MCF 10A (cell line): ENCODE measurements at regions of chr7 and their contacts with region 1.

Region 1: DNA sequence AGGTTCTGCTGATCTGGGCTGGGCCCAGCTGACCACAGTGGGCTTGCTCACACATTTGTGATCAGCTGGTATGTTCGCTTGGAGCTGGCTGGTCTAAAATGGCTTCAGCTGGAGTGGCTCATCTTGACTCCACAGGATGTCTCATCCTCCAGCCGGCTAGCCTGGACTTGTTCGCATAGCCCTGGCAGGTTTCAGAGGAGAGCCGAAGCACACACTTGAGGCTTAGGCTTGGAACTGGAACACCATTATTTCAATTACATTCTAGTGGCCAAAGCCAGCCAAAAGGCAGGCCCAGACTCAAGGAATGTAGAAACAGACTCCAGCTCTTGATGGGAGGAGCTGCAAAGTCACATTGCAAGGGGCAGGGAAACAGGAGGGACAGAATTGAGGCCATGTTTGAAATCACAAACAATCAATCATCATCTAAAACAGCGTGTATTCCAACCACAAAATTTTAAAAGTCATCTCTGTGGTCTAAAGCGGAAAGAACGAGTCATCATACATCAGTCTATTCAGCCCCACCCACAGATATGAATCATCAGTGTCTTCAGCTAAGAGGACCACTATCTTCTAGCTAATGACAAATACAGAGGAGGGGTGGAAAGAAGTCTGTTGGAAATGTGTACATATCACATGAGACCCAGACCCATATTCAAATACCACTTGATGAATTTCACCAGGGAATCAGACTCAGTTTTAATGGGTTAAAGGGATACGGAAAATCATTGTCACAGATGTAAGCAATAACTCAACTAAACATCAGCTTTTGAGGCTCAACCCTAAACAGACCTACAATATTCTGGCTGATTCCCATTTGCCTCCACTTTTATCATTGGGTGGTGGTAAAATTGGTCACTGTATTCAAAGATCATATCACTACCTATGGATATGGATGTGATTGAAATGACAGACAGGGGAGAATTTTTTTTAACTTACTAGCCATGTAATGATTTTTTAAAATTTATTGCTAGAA is 139.0 kb upstream of the MKLN1 start:
- DNase-seq: peak; percentile 94
- H3K4me3 Mint-ChIP-seq: peak overlapping the region; percentile 48
- H3K27ac Mint-ChIP-seq: peak overlapping the region; percentile 90
- H3K4me1 Mint-ChIP-seq: peaks cover 18% of the 10 kb centered on the region
- H3K27me3 Mint-ChIP-seq: no peaks in the 10 kb centered on the region
- CTCF ChIP-seq: no peak

Region 2: DNA sequence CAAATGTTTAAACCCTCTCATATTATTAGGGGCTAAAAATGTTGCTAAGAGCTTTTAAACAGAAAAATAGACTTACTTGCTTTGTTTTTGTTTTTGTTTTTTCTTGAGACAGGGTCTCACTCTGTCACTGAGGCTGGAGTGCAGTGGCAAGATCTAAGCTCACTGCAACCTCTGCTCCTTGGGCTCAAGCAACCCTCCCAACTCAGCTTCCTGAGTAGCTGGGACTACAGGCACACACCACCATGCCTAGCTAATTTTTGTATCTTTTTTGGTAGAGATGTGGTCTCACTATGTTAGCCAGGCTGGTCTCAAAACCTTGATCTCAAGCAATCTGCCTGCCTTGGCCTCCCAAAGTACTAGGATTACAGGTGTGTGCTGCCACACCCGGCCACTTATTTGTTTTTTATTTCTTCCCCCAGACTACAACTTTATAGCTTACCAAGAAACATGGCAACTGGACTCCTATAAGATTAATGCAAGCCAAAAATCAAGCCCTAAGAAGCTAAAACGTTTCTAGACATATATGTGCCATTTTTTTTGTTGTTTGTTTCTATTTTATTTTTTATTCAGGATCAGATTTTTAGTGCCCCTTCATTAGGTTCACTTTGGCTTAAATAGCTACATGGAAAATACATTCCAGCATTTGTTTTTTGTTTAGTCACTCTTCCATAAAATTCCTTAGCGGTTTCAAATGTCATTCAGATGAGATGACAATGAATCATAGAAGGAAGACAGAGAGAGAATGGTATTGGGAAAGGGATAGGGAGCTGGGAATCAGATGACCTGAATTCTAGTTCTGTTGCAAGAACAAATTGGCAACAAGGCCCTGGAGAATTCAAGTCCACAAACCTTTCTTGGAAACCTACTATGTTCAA is 24.4 kb before region 1 on chr7:
- CTCF ChIA-PET with region 1: interaction called, 5 read pairs
- POLR2A ChIA-PET with region 1: interaction called, 34 read pairs
- intact Hi-C with region 1: no loop called
- DNase-seq: peak; percentile 92
- H3K4me3 Mint-ChIP-seq: peak overlapping the region; percentile 65
- H3K27ac Mint-ChIP-seq: peak overlapping the region; percentile 97
- H3K4me1 Mint-ChIP-seq: peaks cover 28% of the 10 kb centered on the region
- H3K27me3 Mint-ChIP-seq: no peaks in the 10 kb centered on the region
- CTCF ChIP-seq: no peak

Region 3: DNA sequence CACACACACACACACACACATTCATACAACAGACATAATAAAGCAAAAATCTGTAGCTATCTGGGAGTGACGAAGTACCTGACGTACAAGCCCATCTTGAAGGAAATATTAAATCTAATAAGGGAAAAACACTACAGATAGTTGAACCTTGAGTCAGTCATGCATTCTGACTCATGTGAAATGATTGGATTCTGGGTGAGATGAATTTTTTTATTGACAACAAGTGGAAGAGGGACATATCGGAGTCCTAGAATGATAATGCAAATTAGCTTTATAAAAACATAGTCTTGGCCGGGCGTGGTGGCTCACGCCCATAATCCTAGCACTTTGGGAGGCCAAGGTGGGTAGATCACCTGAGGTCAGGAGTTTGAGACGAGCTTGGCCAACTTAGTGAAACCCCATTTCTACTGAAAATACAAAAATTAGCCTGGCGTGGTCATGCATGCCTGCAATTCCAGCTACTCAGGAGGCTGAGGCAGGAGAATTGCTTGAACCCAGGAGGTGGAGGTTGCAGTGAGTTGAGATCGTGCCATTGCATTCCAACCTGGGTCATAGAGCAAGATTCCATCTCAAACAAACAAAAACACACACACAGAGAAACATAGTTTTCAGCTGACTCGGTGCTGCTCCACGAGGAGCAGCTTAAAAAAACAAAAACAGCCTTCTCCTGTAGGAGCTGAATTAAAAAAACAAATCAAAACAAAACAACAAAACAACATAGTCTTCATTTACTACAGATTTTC is 15.3 kb before region 1 on chr7:
- CTCF ChIA-PET with region 1: interaction called, 3 read pairs
- POLR2A ChIA-PET with region 1: interaction called, 11 read pairs
- intact Hi-C with region 1: no loop called
- DNase-seq: peak; percentile 20
- H3K4me3 Mint-ChIP-seq: no peak overlapping the region
- H3K27ac Mint-ChIP-seq: peak overlapping the region; percentile 61
- H3K4me1 Mint-ChIP-seq: peaks cover 8% of the 10 kb centered on the region
- H3K27me3 Mint-ChIP-seq: no peaks in the 10 kb centered on the region
- CTCF ChIP-seq: no peak

Region 4: DNA sequence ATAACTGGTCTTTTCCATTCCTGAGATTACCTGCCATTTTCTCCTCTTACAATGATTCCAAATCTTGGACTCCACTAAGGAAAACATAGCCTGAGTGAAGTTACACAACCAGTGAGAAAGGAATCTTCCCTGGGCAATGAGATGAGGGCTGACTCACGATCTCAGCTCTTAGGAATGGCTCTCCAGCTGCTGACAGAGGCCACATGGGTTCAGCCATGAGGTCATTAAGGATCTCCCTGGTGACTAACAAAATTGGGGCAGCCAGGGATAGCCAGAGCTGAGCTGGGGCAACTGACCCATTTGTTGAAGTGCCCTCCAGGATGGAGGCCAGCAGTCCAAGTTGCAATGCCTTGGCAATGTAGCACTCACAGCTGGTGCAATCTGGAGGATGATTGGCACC is 60.4 kb after region 1 on chr7:
- CTCF ChIA-PET with region 1: no interaction called
- POLR2A ChIA-PET with region 1: no interaction called
- intact Hi-C with region 1: loop called (anchors 10 kb)
- DNase-seq: peak; percentile 95
- H3K4me3 Mint-ChIP-seq: no peak overlapping the region
- H3K27ac Mint-ChIP-seq: peak overlapping the region; percentile 17
- H3K4me1 Mint-ChIP-seq: peaks cover 27% of the 10 kb centered on the region
- H3K27me3 Mint-ChIP-seq: no peaks in the 10 kb centered on the region
- CTCF ChIP-seq: no peak